Lower leg skin (tissue), 4 donors: ENCODE measurements at regions of chr9 and their contacts with region 1.

Region 1: GRCh38 chr9:26054600-26055520 is 376.6 kb upstream of the TUSC1 start:
- DNase-seq: no peak
- H3K4me3 ChIP-seq: no peak overlapping the region
- CTCF ChIP-seq: no peak
- POLR2A ChIP-seq: no peak

Region 2: GRCh38 chr9:25584611-25585010 is 470.2 kb before region 1 on chr9:
- intact Hi-C with region 1: loop called (anchors 5 kb)
- DNase-seq: no peak
- H3K4me3 ChIP-seq: no peak overlapping the region
- CTCF ChIP-seq: no peak
- POLR2A ChIP-seq: no peak

Region 3: DNA sequence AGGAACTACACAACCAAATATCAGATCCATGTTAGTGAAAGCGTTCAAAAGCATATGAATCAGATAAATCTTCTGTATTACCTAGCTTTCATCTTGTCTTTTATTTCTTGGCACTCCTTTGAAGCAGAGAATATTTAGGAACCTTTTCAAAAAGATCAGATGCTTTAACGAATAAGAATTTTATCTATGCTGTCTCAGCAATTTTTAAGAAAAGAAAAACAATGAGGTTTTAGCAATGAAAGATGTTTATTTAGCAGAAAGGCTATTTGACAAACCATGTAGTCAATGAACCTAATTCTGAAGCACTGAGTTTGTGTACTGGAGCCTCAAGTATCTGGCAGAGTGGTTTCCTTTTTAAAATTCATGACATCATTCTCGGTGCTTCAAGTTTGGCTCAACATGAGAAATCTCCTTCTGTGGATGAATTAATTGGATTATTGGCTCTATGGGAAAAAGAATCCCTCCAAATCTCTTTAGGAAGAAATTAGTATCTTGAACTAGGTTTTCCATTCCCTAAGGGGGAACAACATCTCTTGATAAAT is 303.0 kb after region 1 on chr9:
- intact Hi-C with region 1: no loop called
- DNase-seq: no peak
- H3K4me3 ChIP-seq: no peak overlapping the region
- CTCF ChIP-seq: no peak
- POLR2A ChIP-seq: no peak